Ascending aorta (tissue), 2 donors: ENCODE measurements at regions of chr4 and their contacts with region 1.

Region 1: GRCh38 chr4:139740531-139741041 is 75.0 kb downstream of the MGST2 start:
- DNase-seq: peak in 1 of 2 donors; percentile 83
- H3K4me3 ChIP-seq: peak overlapping the region in 1 of 2 donors; percentile 19
- H3K27ac ChIP-seq: peak overlapping the region; percentile 71 to 77
- H3K4me1 ChIP-seq: peaks cover 0 to 19% of the 10 kb centered on the region in 2 donors
- H3K27me3 ChIP-seq: no peaks in the 10 kb centered on the region
- CTCF ChIP-seq: peak in 2 of 3 experiments; percentile 4 to 17

Region 2: GRCh38 chr4:139315221-139315675 is 425.3 kb before region 1 on chr4:
- intact Hi-C with region 1: no loop called
- DNase-seq: no peak
- H3K4me3 ChIP-seq: no peak overlapping the region
- H3K27ac ChIP-seq: no peak overlapping the region
- H3K4me1 ChIP-seq: peaks cover 0 to 7% of the 10 kb centered on the region in 2 donors
- H3K27me3 ChIP-seq: no peaks in the 10 kb centered on the region
- CTCF ChIP-seq: no peak

Region 3: DNA sequence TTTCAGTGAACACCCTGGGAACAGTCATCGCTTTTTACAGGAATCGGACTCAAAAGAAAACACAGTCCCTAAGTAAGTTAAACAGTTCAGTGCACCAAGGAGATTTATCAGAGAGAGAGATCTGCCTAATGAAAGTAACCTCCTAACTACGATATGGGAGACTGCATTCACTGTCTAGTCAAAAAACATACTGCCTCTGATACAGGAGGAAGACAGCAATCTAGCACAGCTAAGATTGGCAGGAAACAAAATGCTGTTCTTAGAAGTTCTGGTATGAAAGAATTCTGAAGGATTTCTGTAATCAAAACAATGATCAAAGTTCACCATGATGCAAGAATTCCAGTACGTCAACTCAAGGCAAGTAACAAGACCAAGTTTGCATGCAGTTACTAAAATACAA is 320.6 kb after region 1 on chr4:
- intact Hi-C with region 1: no loop called
- DNase-seq: no peak
- H3K4me3 ChIP-seq: peak overlapping the region in 1 of 2 donors; percentile 48
- H3K27ac ChIP-seq: peak overlapping the region; percentile 59 to 71
- H3K4me1 ChIP-seq: peaks cover 0 to 11% of the 10 kb centered on the region in 2 donors
- H3K27me3 ChIP-seq: no peaks in the 10 kb centered on the region
- CTCF ChIP-seq: no peak

Region 4: GRCh38 chr4:140237606-140237986 is 497.0 kb after region 1 on chr4:
- intact Hi-C with region 1: loop called (anchors 5 kb)
- DNase-seq: peak; percentile 35 to 79
- H3K4me3 ChIP-seq: peak overlapping the region; percentile 5 to 52
- H3K27ac ChIP-seq: peak overlapping the region; percentile 62 to 75
- H3K4me1 ChIP-seq: peaks cover 5 to 18% of the 10 kb centered on the region in 2 donors
- H3K27me3 ChIP-seq: no peaks in the 10 kb centered on the region
- CTCF ChIP-seq: no peak